ENCODE measurements at regions of chr13 and their contacts with region 1.

Region 1: DNA sequence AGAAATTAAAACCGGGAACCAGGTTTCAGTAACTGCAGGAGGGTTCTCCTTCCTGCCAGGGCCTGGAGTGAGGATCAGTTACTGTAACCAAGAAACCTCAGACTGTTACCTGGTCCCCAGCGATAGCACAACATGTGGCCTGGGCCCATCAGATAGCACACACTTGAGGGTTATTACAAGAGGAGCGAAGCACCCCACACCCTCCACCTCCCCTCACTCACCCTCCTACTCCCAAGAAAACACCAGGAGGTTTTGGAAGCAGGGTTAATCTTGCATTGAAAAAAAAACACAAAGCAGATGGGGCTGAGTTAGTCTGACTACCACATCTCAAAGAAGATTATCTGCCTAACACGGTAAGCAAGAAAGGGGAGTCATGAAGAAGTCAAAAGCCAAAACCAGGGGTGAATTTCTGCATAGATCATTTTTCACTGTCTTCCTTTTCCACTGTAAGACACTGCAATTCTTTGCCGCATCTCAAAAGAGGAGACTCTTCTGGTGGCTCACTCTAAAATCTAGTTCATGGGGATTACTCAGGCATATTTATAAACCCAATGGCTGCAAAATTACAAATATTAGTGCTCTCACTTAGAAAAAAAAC is 75.9 kb upstream of the DOCK9 start:
- DNase-seq: peak; percentile 35
- H3K4me3 Mint-ChIP-seq: peak overlapping the region; percentile 18
- H3K27ac Mint-ChIP-seq: peak overlapping the region; percentile 38
- H3K4me1 Mint-ChIP-seq: peaks cover 62% of the 10 kb centered on the region
- H3K27me3 Mint-ChIP-seq: no peaks in the 10 kb centered on the region

Region 2: DNA sequence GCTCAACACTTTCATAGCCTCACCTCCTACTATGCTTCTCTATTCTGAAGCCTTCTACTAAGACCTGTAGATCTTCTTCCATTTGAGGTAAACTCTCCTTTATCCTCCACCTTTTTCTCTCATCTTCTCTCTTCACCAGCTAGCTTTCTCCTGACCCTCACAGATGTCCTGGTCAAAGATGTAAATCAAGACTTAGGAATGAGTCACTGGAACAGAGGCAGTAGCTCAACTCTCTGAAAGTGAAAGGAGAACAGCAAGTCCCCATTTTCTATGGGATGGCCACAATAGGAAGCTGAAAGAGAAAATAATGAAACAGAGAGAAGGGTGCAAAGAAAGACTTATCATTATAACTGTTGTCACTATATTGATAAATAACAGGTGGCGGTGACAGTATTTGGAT is 10.2 kb after region 1 on chr13:
- intact Hi-C with region 1: loop called (anchors 1 kb)
- DNase-seq: no peak
- H3K4me3 Mint-ChIP-seq: peak overlapping the region; percentile 20
- H3K27ac Mint-ChIP-seq: peak overlapping the region; percentile 40
- H3K4me1 Mint-ChIP-seq: peaks cover 60% of the 10 kb centered on the region
- H3K27me3 Mint-ChIP-seq: no peaks in the 10 kb centered on the region

Region 3: DNA sequence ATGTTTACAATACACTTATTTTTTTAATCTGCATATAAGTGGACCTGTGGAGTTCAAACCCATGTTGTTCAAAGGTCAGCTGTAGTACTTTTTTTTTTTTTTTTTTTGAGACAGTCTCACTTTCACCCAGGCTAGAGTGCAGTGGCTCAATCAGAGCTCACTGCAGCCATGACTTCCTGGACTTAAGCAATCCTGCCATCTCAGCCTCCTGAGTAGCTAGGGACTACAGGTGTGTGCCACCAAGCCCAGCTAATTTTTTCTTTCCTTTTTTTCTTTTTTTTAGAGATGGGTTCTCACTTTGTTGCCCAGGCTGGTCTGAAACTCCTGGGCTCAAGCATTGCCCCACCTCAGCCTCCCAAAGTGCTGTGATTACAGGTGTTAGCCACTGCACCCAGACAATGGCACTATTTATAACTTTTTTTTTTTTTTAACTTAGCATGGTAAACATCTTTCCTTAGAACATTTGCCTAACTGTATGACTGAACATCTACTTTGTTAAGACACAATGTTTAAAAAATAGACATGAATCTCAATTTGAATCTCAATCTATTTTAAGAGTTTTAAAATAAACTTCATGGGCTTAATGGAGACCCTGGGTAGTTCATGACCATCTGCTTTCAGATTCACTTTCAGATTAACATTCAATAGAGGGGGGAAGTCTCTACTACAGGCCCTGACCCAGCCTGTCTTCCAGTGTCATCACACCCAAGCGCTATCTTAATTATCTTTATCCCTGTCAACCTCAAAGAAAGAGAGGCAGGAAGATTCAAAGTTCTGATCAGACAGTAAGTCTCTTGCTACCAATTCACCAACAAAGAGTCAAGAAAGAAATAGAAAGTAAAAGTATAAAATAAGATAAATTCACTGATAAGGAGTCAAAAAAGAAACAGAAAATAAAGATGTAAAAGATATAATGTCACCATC is 21.8 kb after region 1 on chr13:
- intact Hi-C with region 1: loop called (anchors 2 kb)
- DNase-seq: peak; percentile 50
- H3K4me3 Mint-ChIP-seq: peak overlapping the region; percentile 45
- H3K27ac Mint-ChIP-seq: peak overlapping the region; percentile 81
- H3K4me1 Mint-ChIP-seq: peaks cover 65% of the 10 kb centered on the region
- H3K27me3 Mint-ChIP-seq: no peaks in the 10 kb centered on the region

Region 4: DNA sequence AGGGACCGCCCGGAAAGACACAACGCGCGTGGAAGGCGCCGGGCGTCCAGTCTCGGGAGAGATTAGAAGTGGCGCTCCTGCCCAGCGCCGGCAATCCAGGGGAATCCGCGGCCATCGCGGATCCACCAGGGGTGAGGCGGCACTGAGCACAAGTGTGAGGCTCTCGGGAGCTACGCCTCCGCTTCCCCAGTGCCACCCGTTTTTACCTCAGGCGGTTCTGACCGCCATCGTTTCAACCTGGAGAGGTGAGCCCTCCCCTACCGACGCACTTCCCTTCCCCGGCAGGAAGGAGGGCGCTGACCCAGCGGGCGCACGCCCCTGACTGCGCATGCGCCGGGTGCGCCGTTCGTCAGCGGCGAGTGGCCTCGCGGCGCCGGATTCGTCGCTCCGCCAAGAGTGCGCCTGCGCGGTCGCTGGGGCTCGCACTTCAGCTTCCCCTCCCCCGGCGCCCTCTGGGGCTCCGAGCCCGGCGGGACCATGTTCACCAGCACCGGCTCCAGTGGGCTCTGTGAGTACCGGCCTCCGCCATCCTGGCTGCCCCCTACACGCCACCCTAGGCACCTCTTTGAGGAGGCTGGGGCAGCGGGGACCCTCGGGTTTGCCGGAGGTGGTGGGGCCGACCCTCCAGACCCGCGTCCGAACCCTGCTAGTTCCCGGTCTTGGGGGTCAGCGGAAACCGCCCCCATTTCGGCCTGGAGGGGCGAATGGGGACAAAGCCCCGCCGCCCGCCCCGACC is 146.9 kb after region 1 on chr13 and contains the start of gene UBAC2:
- intact Hi-C with region 1: loop called (anchors 5 kb)
- DNase-seq: peak; percentile 96
- H3K4me3 Mint-ChIP-seq: peak within 1 kb of the TSS; percentile 97
- H3K27ac Mint-ChIP-seq: peak within 1 kb of the TSS; percentile 93
- H3K4me1 Mint-ChIP-seq: peaks cover 53% of the 10 kb centered on the region
- H3K27me3 Mint-ChIP-seq: no peaks in the 10 kb centered on the region
- total RNA-seq, gene UBAC2: 53.4 and 55.1 TPM in 2 replicates

Measured in activated T-helper 2 cell treated with anti-CD3 and anti-CD28 coated beads, Interferon-gamma antibody, Interleukin-2, Interleukin-4, amounts not matched to agents 10 μg/mL and 5 μg/mL and 100 μg/mL, durations not matched to agents 14 hours and 24 hours and 36 hours (primary cell).